ENCODE measurements at regions of chr2 and their contacts with region 1.

Region 1: DNA sequence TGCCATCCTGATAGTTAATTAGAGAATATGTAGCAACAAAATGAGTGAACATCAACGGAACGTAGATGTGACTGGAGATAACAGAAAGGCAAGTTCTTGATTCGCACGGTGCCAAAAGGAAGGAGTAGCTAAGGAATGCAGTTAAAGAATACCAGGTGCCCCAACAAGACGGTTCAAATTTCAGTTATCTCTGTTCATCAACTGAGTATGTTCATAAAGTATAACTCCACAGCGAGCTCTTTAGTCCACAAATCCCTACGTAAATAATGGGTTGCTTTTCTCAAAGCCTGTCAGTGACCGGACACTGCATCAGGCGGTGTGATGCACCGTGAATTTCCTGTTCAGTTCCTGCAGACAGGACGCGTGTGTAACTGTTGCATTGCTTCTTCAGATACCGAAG is 91.8 kb downstream of the NOL10 start:
- DNase-seq: no peak
- H3K4me3 ChIP-seq: no peak overlapping the region
- CTCF ChIP-seq: no peak

Region 2: GRCh38 chr2:10091182-10091888 is 506.6 kb before region 1 on chr2:
- in situ Hi-C with region 1: no loop called
- DNase-seq: no peak
- H3K4me3 ChIP-seq: no peak overlapping the region
- CTCF ChIP-seq: no peak

Region 3: GRCh38 chr2:10408649-10409579 is 189.0 kb before region 1 on chr2:
- in situ Hi-C with region 1: no loop called
- DNase-seq: no peak
- H3K4me3 ChIP-seq: no peak overlapping the region
- CTCF ChIP-seq: peak; percentile 96

Region 4: GRCh38 chr2:10647886-10648605 is 50.1 kb after region 1 on chr2:
- in situ Hi-C with region 1: loop called (anchors 5 kb)
- DNase-seq: peak; percentile 27
- H3K4me3 ChIP-seq: no peak overlapping the region
- CTCF ChIP-seq: no peak